ENCODE measurements at regions of chr1 and their contacts with region 1.

Region 1: DNA sequence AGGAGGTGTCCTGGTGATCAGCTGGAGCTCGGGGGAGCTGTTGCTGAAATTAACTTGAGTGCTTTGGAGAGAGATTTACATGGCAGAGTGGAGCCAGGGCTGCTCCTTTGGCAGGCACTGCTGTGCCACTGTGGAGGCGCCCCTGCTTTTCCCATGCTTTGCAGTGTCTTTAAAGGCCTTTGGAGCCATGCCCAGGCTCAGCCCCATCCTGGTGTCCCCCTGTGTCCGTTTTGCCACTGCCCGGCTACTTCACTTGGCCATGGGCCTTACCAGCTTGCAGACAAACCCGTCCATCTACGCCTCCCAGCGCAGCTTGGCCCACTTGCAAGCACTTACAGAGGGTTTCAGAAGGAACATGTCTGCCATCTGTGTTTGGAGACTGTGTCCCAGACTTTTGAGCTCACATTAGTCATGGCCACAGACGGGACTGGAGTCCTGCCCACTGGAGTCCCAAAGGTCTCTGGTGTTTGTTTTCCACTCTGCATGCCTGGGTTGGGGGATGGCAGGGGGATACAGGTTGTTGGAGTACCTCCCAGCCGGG is 18.2 kb upstream of the LAMTOR5 start:
- DNase-seq: peak; percentile 77 to 90
- H3K4me3 ChIP-seq: no peak overlapping the region
- CTCF ChIP-seq: no peak
- POLR2A ChIP-seq: no peak

Region 2: GRCh38 chr1:110495926-110496600 is 70.4 kb after region 1 on chr1:
- intact Hi-C with region 1: loop called (anchors 5 kb)
- DNase-seq: peak; percentile 75 to 94
- H3K4me3 ChIP-seq: no peak overlapping the region
- CTCF ChIP-seq: peak in 1 of 3 donors; percentile 75
- POLR2A ChIP-seq: no peak

Measured in lower leg skin (tissue), 4 donors.